Activated CD4-positive, alpha-beta T cell treated with anti-CD3 and anti-CD28 coated beads, Interleukin-2, amount 10 ng/mL, durations not matched to agents 7 days and 5 days (primary cell): ENCODE measurements at regions of chr12 and their contacts with region 1.

Region 1: GRCh38 chr12:38949363-38949762 is 44.0 kb upstream of the CPNE8 start:
- DNase-seq: no peak
- H3K4me3 Mint-ChIP-seq: no peak overlapping the region
- H3K27ac Mint-ChIP-seq: no peak overlapping the region
- H3K4me1 Mint-ChIP-seq: no peaks in the 10 kb centered on the region
- H3K27me3 Mint-ChIP-seq: no peaks in the 10 kb centered on the region

Region 2: GRCh38 chr12:38969706-38970105 is 20.3 kb after region 1 on chr12:
- CTCF ChIA-PET with region 1: no interaction called
- POLR2A ChIA-PET with region 1: no interaction called
- DNase-seq: no peak
- H3K4me3 Mint-ChIP-seq: no peak overlapping the region
- H3K27ac Mint-ChIP-seq: no peak overlapping the region
- H3K4me1 Mint-ChIP-seq: no peaks in the 10 kb centered on the region
- H3K27me3 Mint-ChIP-seq: no peaks in the 10 kb centered on the region

Region 3: GRCh38 chr12:39065455-39065854 is 116.1 kb after region 1 on chr12:
- CTCF ChIA-PET with region 1: no interaction called
- POLR2A ChIA-PET with region 1: interaction called, 13 read pairs
- DNase-seq: no peak
- H3K4me3 Mint-ChIP-seq: no peak overlapping the region
- H3K27ac Mint-ChIP-seq: no peak overlapping the region
- H3K4me1 Mint-ChIP-seq: no peaks in the 10 kb centered on the region
- H3K27me3 Mint-ChIP-seq: no peaks in the 10 kb centered on the region